Psoas muscle (tissue), 8 donors: ENCODE measurements at regions of chr9 and their contacts with region 1.

Region 1: GRCh38 chr9:12224449-12224848 is 468.7 kb upstream of the TYRP1 start:
- DNase-seq: no peak
- ATAC-seq: no peak
- H3K4me3 ChIP-seq: no peak overlapping the region
- H3K27ac ChIP-seq: no peak overlapping the region
- H3K4me1 ChIP-seq: no peaks in the 10 kb centered on the region
- H3K27me3 ChIP-seq: no peaks in the 10 kb centered on the region
- CTCF ChIP-seq: no peak

Region 2: DNA sequence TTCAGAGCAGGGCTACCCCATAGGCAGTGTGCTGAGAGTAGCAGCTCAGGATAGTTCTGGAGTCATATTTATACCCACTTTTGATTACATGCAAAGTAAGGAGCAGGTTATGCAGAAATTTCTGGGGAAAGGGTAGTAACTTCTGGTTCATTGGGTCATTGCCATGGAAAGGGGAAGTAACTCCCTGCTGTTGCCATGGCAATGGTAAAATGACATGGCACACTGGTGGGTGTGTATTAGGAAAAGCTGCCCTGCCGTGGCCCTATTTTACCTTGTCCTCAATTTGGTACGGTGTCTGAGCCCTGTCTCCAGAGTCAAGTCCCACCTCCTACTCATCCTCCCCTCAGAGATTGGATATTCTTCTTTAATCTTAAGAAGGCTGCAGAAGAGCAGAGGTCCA is 57.9 kb before region 1 on chr9:
- intact Hi-C with region 1: no loop called
- DNase-seq: no peak
- ATAC-seq: no peak
- H3K4me3 ChIP-seq: no peak overlapping the region
- H3K27ac ChIP-seq: no peak overlapping the region
- H3K4me1 ChIP-seq: no peaks in the 10 kb centered on the region
- H3K27me3 ChIP-seq: no peaks in the 10 kb centered on the region
- CTCF ChIP-seq: no peak

Region 3: DNA sequence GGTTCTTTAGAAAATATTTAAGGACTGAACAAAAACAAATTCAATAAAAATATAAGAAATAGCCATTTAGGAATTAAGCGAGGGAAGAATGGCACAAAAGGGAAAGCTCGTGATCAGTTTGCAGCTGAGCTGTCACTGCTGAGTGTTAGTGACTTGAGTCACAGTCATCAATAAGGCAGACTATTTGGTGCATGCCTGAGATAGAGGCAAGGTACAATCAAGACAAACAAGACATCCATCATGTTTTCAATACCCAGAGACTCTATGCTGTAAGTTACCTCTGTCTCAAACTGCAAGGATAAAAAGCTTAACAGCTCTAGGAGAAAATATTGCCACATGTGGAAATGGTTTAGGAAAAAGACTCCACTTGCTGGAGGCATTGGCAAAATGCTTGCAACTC is 42.3 kb after region 1 on chr9:
- intact Hi-C with region 1: no loop called
- DNase-seq: no peak
- ATAC-seq: no peak
- H3K4me3 ChIP-seq: no peak overlapping the region
- H3K27ac ChIP-seq: no peak overlapping the region
- H3K4me1 ChIP-seq: no peaks in the 10 kb centered on the region
- H3K27me3 ChIP-seq: no peaks in the 10 kb centered on the region
- CTCF ChIP-seq: no peak

Region 4: DNA sequence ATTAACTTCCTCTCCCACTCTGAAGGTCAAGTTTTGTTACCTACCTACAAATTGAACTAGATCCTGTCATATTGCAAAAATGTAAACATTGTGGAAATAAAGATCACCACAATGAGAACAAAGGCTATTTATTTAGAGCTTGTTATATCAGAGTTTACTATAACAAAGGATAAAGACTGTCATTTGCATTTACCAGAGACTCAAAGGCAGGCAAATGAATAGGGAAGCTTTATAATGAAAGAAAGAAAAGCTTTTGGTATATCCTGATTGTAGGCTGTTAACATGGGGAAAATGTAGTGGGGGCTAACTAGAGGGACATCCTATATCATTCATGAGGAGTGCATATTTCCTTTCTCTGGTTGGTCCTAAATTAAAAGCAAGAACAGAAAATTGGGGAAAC is 65.3 kb after region 1 on chr9:
- intact Hi-C with region 1: loop called in 1 of 2 experiments (anchors 10 kb)
- DNase-seq: no peak
- ATAC-seq: no peak
- H3K4me3 ChIP-seq: no peak overlapping the region
- H3K27ac ChIP-seq: no peak overlapping the region
- H3K4me1 ChIP-seq: no peaks in the 10 kb centered on the region
- H3K27me3 ChIP-seq: no peaks in the 10 kb centered on the region
- CTCF ChIP-seq: no peak